Activated T-helper 2 cell treated with anti-CD3 and anti-CD28 coated beads, Interferon-gamma antibody, Interleukin-2, Interleukin-4, amounts not matched to agents 10 μg/mL and 5 μg/mL and 100 μg/mL, durations not matched to agents 14 hours and 24 hours and 36 hours (primary cell): ENCODE measurements at regions of chr4 and their contacts with region 1.

Region 1: GRCh38 chr4:88033309-88033708 is 25.9 kb downstream of the PKD2 start:
- DNase-seq: peak; percentile 16
- H3K4me3 Mint-ChIP-seq: no peak overlapping the region
- H3K27ac Mint-ChIP-seq: no peak overlapping the region
- H3K4me1 Mint-ChIP-seq: peaks cover 20% of the 10 kb centered on the region
- H3K27me3 Mint-ChIP-seq: no peaks in the 10 kb centered on the region

Region 2: DNA sequence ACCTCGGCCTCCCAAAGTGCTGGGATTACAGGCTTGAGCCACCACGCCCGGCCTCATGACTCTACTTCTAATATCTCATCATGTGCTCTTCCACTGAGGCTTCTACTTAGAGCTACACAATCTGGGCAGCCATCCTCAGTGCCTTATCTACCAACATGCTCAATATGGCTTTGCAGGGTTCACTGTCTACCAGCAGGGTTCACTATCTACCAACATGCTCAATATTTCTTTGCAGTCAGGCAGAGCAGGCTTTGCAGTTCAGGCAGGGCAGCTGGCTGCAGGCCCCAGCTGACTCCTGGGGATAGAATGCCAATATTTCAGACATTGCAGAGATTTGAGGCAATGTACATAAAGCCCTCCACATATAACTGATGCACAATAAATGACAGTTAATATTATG is 21.6 kb after region 1 on chr4:
- intact Hi-C with region 1: no loop called
- DNase-seq: no peak
- H3K4me3 Mint-ChIP-seq: no peak overlapping the region
- H3K27ac Mint-ChIP-seq: no peak overlapping the region
- H3K4me1 Mint-ChIP-seq: peaks cover 2% of the 10 kb centered on the region
- H3K27me3 Mint-ChIP-seq: no peaks in the 10 kb centered on the region

Region 3: DNA sequence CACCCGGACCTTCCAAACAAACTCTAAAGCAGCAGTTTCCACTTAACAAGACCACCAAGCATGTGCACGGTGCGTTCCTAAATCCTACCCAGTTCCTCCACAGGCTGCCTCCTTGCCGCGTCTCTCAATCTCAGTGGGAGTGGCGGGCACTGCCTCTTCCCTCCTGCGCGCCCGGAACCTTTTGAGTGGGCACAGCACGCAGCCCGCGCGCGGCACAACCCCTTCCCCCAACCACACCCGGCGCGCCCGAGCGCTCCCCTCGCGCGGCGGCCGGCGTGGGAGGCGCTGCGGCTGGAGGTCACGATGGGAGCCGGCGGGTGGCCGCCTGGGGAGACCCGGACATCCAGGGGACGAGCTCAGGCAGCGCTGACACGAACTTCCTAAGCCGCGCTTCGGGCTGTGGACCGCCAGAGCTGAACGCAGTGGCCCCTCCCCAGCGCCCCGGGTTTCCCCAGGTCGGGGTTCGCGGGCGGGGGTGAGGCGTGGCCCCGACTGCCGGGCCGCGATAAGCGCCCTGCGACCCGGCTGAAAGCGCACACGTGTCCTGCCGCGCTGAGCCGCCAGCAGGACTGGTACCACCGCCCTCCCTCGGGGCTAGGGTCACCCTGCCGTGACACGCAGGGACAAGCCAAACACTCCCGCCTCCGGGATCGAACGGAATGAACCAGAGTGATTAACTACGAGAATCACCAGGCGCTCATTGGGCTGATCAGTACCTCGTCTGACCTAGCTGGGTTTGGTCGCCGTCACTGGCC is 125.4 kb after region 1 on chr4 and contains the start of gene ABCG2:
- intact Hi-C with region 1: loop called (anchors 5 kb)
- DNase-seq: peak; percentile 46
- H3K4me3 Mint-ChIP-seq: peak within 1 kb of the TSS; percentile 77
- H3K27ac Mint-ChIP-seq: peak within 1 kb of the TSS; percentile 66
- H3K4me1 Mint-ChIP-seq: peaks cover 14% of the 10 kb centered on the region
- H3K27me3 Mint-ChIP-seq: peaks cover 13% of the 10 kb centered on the region
- total RNA-seq, gene ABCG2: 0.48 and 0.89 TPM in 2 replicates